Endothelial cell of umbilical vein (primary cell): ENCODE measurements at regions of chr2 and their contacts with region 1.

Region 1: DNA sequence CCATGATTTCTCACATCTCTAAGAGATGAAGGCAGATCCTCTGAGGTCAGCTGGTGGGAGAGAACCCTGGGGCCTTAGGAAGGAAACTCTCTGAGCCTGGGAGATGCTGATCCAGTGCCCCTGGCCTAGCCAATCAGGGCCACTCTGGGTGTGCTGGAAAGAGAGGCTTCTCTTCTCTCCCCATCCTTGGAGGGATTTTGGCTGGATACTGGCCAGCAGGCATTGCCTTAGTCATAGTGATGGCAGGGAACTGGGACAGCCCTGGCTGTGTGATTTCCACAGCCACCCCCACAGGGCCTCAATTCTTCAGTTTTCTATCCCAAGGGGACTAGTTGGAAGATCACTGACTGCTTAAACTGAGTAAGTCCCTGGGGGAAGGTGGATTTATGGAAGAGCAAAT is 26.6 kb upstream of the PLB1 start:
- DNase-seq: no peak
- H3K4me3 ChIP-seq: no peak overlapping the region
- H3K27ac ChIP-seq: no peak overlapping the region
- H3K4me1 ChIP-seq: peaks cover 4% of the 10 kb centered on the region
- H3K27me3 ChIP-seq: peaks cover 0 to 3% of the 10 kb centered on the region in 2 experiments
- CTCF ChIP-seq: no peak
- POLR2A ChIP-seq: no peak

Region 2: DNA sequence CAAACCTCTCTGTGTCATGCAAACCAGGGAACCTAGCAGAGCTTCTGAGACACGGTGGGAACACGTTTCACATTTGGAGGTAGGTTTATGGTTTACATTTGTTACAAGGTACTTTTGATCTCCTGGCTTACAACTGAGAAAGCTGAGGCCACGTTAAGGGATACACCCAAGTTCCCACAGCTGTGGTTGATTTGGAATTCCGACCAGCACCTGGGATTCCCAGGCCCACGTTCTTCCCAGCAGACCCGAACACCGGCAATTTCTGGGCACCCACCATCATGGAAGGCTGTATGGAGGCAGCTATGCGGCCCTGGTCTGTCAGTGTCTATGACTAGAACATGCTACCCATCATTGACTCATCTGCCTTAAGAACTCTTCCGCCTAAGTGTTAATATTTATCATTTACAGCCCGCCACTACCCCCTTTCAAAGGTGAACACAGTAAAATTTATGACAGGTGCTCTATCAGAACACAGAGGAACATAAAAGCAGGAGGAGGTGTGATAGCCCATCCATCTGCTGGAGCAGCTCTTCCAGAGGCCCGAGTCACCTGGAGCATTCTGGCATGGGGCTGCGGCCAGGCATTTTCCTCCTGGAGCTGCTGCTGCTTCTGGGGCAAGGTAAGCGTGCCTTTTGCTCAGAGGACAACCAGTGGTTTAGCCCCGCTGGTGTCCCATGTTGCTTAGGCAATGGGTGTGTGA is 26.4 kb after region 1 on chr2 and contains the start of gene PLB1:
- CTCF ChIA-PET with region 1: no interaction called
- POLR2A ChIA-PET with region 1: no interaction called
- dilution Hi-C with region 1: no loop called
- intact Hi-C with region 1: loop called (anchors 1 kb)
- DNase-seq: no peak
- H3K4me3 ChIP-seq: no peak within 1 kb of the TSS
- H3K27ac ChIP-seq: no peak within 1 kb of the TSS
- H3K4me1 ChIP-seq: no peaks in the 10 kb centered on the region
- H3K27me3 ChIP-seq: peaks cover 4 to 10% of the 10 kb centered on the region in 2 experiments
- CTCF ChIP-seq: no peak
- POLR2A ChIP-seq: no peak
- total RNA-seq, gene PLB1: 0.80 and 1.1 TPM in 2 replicates

Region 3: DNA sequence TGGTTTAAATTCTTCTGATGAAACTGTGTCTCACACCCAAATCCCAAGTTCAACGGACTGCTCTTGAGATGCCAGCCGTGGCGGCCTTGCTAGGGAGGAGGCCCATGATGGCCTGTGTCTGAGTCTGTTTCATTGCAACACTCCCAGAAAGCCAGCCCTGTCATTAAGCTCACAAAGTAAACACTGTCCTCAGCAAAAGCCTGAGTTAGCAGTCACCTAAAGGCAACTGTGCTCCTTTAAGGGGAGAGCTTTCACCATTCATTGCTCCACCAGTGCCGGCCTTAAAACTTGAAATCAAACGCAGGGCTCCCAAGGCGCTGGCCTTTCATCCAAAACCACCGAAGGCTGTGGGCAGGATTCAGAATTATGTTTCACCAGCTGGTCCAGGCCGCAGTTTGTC is 239.8 kb after region 1 on chr2:
- CTCF ChIA-PET with region 1: no interaction called
- POLR2A ChIA-PET with region 1: no interaction called
- dilution Hi-C with region 1: no loop called
- intact Hi-C with region 1: no loop called
- DNase-seq: no peak
- H3K4me3 ChIP-seq: no peak overlapping the region
- H3K27ac ChIP-seq: no peak overlapping the region
- H3K4me1 ChIP-seq: no peaks in the 10 kb centered on the region
- H3K27me3 ChIP-seq: peaks cover 0 to 2% of the 10 kb centered on the region in 2 experiments
- CTCF ChIP-seq: no peak
- POLR2A ChIP-seq: no peak